ENCODE measurements at regions of chr14 and their contacts with region 1.

Region 1: GRCh38 chr14:33432407-33433023 is 493.8 kb downstream of the NPAS3 start:
- DNase-seq: peak; percentile 32
- H3K4me3 ChIP-seq: no peak overlapping the region
- H3K27ac ChIP-seq: no peak overlapping the region
- H3K4me1 ChIP-seq: no peaks in the 10 kb centered on the region
- H3K27me3 ChIP-seq: no peaks in the 10 kb centered on the region
- CTCF ChIP-seq: peak; percentile 36 to 57 (median 46)
- EP300 ChIP-seq: no peak
- POLR2A ChIP-seq: no peak

Region 2: GRCh38 chr14:32576088-32576795 is 856.3 kb before region 1 on chr14:
- in situ Hi-C with region 1: loop called in 1 of 4 experiments (anchors 25 kb)
- intact Hi-C with region 1: no loop called
- DNase-seq: peak; percentile 41
- H3K4me3 ChIP-seq: peak overlapping the region in 1 of 4 donors; percentile 29
- H3K27ac ChIP-seq: no peak overlapping the region
- H3K4me1 ChIP-seq: peaks cover 8 to 29% (median 14%) of the 10 kb centered on the region in 4 donors
- H3K27me3 ChIP-seq: no peaks in the 10 kb centered on the region
- CTCF ChIP-seq: peak; percentile 88 to 97 (median 95)
- EP300 ChIP-seq: no peak
- POLR2A ChIP-seq: no peak